Psoas muscle (tissue), 8 donors: ENCODE measurements at regions of chr20 and their contacts with region 1.

Region 1: GRCh38 chr20:62065669-62066338 is at the start of gene TAF4:
- DNase-seq: peak; percentile 82 to 91
- ATAC-seq: peak; percentile 63 to 68 (median 66)
- H3K4me3 ChIP-seq: peak within 1 kb of the TSS; percentile 70
- H3K27ac ChIP-seq: peak within 1 kb of the TSS; percentile 85
- H3K4me1 ChIP-seq: peaks cover 49% of the 10 kb centered on the region
- H3K27me3 ChIP-seq: no peaks in the 10 kb centered on the region
- CTCF ChIP-seq: no peak
- total RNA-seq, gene TAF4: 10.7 to 17.7 (median 14.4) TPM

Region 2: DNA sequence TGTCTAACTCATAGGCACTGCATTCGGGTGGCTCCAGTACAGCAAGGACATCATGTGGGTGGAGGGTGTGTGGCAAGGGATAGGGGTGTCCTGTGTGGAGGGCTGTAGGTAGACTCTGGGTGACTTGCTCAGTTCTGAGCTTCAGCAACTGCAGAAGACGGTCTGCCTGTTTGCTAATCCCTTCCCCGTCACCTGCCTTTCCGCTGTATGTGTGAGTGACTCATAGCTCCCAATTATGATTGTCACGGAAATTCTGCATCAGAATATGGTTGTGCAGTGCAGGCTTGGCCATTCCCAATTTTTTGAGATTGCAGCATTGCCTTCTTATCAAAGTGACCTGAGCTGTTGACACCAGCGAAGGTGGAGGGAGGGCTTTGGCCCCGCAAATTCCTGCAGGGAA is 639.4 kb before region 1 on chr20:
- intact Hi-C with region 1: no loop called
- DNase-seq: no peak
- ATAC-seq: no peak
- H3K4me3 ChIP-seq: no peak overlapping the region
- H3K27ac ChIP-seq: no peak overlapping the region
- H3K4me1 ChIP-seq: no peaks in the 10 kb centered on the region
- H3K27me3 ChIP-seq: no peaks in the 10 kb centered on the region
- CTCF ChIP-seq: no peak

Region 3: GRCh38 chr20:61912665-61913422 is 153.0 kb before region 1 on chr20:
- intact Hi-C with region 1: no loop called
- DNase-seq: peak in 1 of 2 donors; percentile 28
- ATAC-seq: no peak
- H3K4me3 ChIP-seq: no peak overlapping the region
- H3K27ac ChIP-seq: no peak overlapping the region
- H3K4me1 ChIP-seq: no peaks in the 10 kb centered on the region
- H3K27me3 ChIP-seq: peaks cover 0 to 6% (median 0%) of the 10 kb centered on the region in 3 donors
- CTCF ChIP-seq: no peak

Region 4: GRCh38 chr20:62025832-62026563 is 39.8 kb before region 1 on chr20:
- intact Hi-C with region 1: loop called (anchors 5 kb)
- DNase-seq: peak in 1 of 2 donors; percentile 36
- ATAC-seq: peak; percentile 57 to 69 (median 58)
- H3K4me3 ChIP-seq: no peak overlapping the region
- H3K27ac ChIP-seq: peak overlapping the region; percentile 63
- H3K4me1 ChIP-seq: peaks cover 47% of the 10 kb centered on the region
- H3K27me3 ChIP-seq: no peaks in the 10 kb centered on the region
- CTCF ChIP-seq: peak; percentile 54

Region 5: GRCh38 chr20:62121776-62122631 is 56.2 kb after region 1 on chr20 and contains the start of gene LSM14B:
- intact Hi-C with region 1: loop called (anchors 2 to 5 kb)
- DNase-seq: peak; percentile 98
- ATAC-seq: peak; percentile 82 to 89 (median 83)
- H3K4me3 ChIP-seq: peak within 1 kb of the TSS; percentile 81
- H3K27ac ChIP-seq: peak within 1 kb of the TSS; percentile 99
- H3K4me1 ChIP-seq: peaks cover 59% of the 10 kb centered on the region
- H3K27me3 ChIP-seq: no peaks in the 10 kb centered on the region
- CTCF ChIP-seq: no peak
- total RNA-seq, gene LSM14B: 52.4 to 67.0 (median 60.8) TPM

Region 6: DNA sequence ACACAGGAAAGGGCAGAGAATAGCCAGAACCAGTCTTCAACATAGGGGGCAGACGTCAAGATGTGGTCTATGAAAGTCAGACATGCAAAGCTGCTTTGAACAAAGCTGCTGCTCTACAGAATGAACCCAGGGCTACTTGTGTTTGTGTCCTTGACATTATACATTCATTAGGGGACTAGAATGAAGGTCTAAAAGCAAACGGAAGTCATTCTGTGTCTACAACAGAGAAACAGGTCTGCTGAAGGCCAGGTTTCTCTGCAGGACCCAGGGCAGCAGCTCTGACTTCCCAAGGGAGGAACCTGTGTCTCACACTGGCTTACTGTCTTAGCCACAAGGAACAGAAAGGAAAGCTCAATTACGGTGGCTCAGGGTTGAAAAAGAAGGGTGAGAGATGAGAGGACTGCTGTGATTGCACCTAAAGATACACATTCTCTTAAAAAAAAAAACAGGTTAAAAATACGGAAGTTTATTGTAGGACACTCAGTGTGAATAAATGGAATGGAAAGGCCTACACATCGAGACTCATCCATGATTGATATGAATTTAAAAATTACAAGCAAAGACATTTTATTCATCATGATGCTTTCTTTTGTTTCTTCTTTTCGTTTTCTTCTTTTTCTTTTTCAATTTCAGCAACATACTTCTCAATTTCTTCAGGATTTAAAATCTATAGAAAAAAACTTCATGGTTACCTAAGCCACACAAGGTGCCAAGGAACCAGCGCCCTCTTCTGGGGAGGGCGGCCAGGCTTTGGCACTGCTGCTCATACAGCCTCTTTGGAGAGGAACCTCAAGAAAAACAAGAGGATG is 70.7 kb after region 1 on chr20:
- intact Hi-C with region 1: loop called in 1 of 2 experiments (anchors 5 kb)
- DNase-seq: peak; percentile 67 to 83
- ATAC-seq: peak in 2 of 4 donors; percentile 33 to 34
- H3K4me3 ChIP-seq: no peak overlapping the region
- H3K27ac ChIP-seq: peak overlapping the region; percentile 67
- H3K4me1 ChIP-seq: peaks cover 42% of the 10 kb centered on the region
- H3K27me3 ChIP-seq: no peaks in the 10 kb centered on the region
- CTCF ChIP-seq: peak; percentile 74

Region 7: GRCh38 chr20:62143118-62143973 is 77.5 kb after region 1 on chr20 and contains the starts of genes PSMA7 and SS18L1:
- intact Hi-C with region 1: loop called (anchors 2 to 5 kb)
- DNase-seq: peak; percentile 91 to 94
- ATAC-seq: peak; percentile 82 to 88 (median 88)
- H3K4me3 ChIP-seq: peak within 1 kb of the TSS; percentile 81
- H3K27ac ChIP-seq: peak within 1 kb of the TSS; percentile 93
- H3K4me1 ChIP-seq: peaks cover 22% of the 10 kb centered on the region
- H3K27me3 ChIP-seq: no peaks in the 10 kb centered on the region
- CTCF ChIP-seq: no peak
- total RNA-seq, gene PSMA7: 307 to 499 (median 459) TPM
- total RNA-seq, gene SS18L1: 10.2 to 18.0 (median 13.2) TPM